ENCODE measurements at regions of chr10 and their contacts with region 1.

Region 1: GRCh38 chr10:6530211-6530840 is 49.8 kb downstream of the PRKCQ start:
- DNase-seq: peak; percentile 37 to 89 (median 85)
- ATAC-seq: peak; percentile 96
- H3K4me3 ChIP-seq: peak overlapping the region; percentile 34
- H3K4me3 Mint-ChIP-seq: peak overlapping the region; percentile 84 to 95 (median 88)
- H3K27ac ChIP-seq: peak overlapping the region; percentile 74
- H3K27ac Mint-ChIP-seq: peak overlapping the region; percentile 97 to 100 (median 99)
- H3K4me1 ChIP-seq: peaks cover 46 to 58% of the 10 kb centered on the region in 2 donors
- H3K4me1 Mint-ChIP-seq: peaks cover 67 to 99% (median 91%) of the 10 kb centered on the region in 7 donors
- H3K27me3 ChIP-seq: no peaks in the 10 kb centered on the region
- H3K27me3 Mint-ChIP-seq: no peaks in the 10 kb centered on the region

Region 2: GRCh38 chr10:6314620-6315205 is 215.6 kb before region 1 on chr10:
- CTCF ChIA-PET with region 1: no interaction called
- POLR2A ChIA-PET with region 1: no interaction called
- intact Hi-C with region 1: no loop called
- DNase-seq: no peak
- ATAC-seq: no peak
- H3K4me3 ChIP-seq: no peak overlapping the region
- H3K4me3 Mint-ChIP-seq: no peak overlapping the region
- H3K27ac ChIP-seq: no peak overlapping the region
- H3K27ac Mint-ChIP-seq: no peak overlapping the region
- H3K4me1 ChIP-seq: no peaks in the 10 kb centered on the region
- H3K4me1 Mint-ChIP-seq: peaks cover 0 to 19% (median 0%) of the 10 kb centered on the region in 7 donors
- H3K27me3 ChIP-seq: no peaks in the 10 kb centered on the region
- H3K27me3 Mint-ChIP-seq: no peaks in the 10 kb centered on the region

Region 3: DNA sequence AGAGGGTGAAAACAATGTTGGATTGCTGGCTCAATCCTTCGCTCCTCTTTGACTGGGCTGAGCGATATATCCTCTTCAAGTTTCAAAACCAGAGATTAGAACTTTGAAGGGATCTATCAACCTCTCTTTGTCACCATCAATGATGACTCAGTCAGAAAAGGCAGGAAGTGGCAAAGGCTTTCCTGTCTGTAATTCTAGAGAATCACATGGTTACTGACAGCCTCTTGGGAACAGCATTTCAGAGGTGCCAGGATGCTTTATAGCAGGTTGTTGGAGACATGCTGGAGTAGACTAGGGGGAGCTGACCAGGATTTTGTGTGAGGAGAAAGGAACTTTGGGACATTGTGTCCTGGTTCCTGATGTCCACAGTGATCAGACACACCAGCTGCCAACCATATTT is 31.6 kb before region 1 on chr10:
- CTCF ChIA-PET with region 1: no interaction called
- POLR2A ChIA-PET with region 1: interaction called, 5 read pairs
- intact Hi-C with region 1: loop called (anchors 1 kb)
- DNase-seq: peak in 8 of 9 donors; percentile 48 to 75 (median 67)
- ATAC-seq: peak; percentile 85
- H3K4me3 ChIP-seq: no peak overlapping the region
- H3K4me3 Mint-ChIP-seq: peak overlapping the region; percentile 13 to 86 (median 59)
- H3K27ac ChIP-seq: peak overlapping the region; percentile 36
- H3K27ac Mint-ChIP-seq: peak overlapping the region; percentile 81 to 94 (median 90)
- H3K4me1 ChIP-seq: peaks cover 33 to 49% of the 10 kb centered on the region in 2 donors
- H3K4me1 Mint-ChIP-seq: peaks cover 24 to 47% (median 43%) of the 10 kb centered on the region in 7 donors
- H3K27me3 ChIP-seq: no peaks in the 10 kb centered on the region
- H3K27me3 Mint-ChIP-seq: no peaks in the 10 kb centered on the region

Region 4: GRCh38 chr10:6563075-6563474 is 32.7 kb after region 1 on chr10:
- CTCF ChIA-PET with region 1: no interaction called
- POLR2A ChIA-PET with region 1: interaction called, 34 read pairs
- intact Hi-C with region 1: loop called (anchors 1 kb)
- DNase-seq: peak in 4 of 9 donors; percentile 33 to 60 (median 39)
- ATAC-seq: peak; percentile 56
- H3K4me3 ChIP-seq: peak overlapping the region; percentile 42
- H3K4me3 Mint-ChIP-seq: peak overlapping the region; percentile 69 to 89 (median 80)
- H3K27ac ChIP-seq: peak overlapping the region; percentile 46
- H3K27ac Mint-ChIP-seq: peak overlapping the region; percentile 47 to 94 (median 87)
- H3K4me1 ChIP-seq: peaks cover 69 to 73% of the 10 kb centered on the region in 2 donors
- H3K4me1 Mint-ChIP-seq: peaks cover 65 to 96% (median 91%) of the 10 kb centered on the region in 7 donors
- H3K27me3 ChIP-seq: no peaks in the 10 kb centered on the region
- H3K27me3 Mint-ChIP-seq: no peaks in the 10 kb centered on the region

Region 5: DNA sequence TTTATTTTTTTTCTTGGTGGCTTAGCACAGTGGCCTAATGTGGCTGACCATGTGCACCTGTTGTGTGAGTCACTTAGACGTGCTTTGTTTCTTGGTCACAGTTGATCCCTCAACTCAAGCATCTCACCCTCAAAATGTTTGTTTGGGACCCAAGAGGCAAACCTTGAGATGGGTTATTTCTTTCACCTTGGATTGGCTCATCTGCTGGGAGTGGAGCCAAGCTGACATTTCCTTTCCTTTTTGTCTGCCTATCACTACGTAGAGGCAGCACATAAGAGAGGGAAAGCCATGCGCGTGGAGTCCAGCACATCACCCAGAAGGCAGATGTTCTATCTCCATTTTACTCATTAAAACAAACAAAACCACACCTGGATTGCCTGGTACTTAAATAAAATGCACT is 56.2 kb after region 1 on chr10:
- CTCF ChIA-PET with region 1: interaction called, 3 read pairs
- POLR2A ChIA-PET with region 1: interaction called, 97 read pairs
- intact Hi-C with region 1: no loop called
- DNase-seq: peak in 2 of 9 donors; percentile 30 to 48
- ATAC-seq: peak; percentile 37
- H3K4me3 ChIP-seq: peak overlapping the region; percentile 61
- H3K4me3 Mint-ChIP-seq: peak overlapping the region; percentile 86 to 99 (median 93)
- H3K27ac ChIP-seq: peak overlapping the region; percentile 94
- H3K27ac Mint-ChIP-seq: peak overlapping the region; percentile 94 to 99 (median 97)
- H3K4me1 ChIP-seq: peaks cover 44 to 57% of the 10 kb centered on the region in 2 donors
- H3K4me1 Mint-ChIP-seq: peaks cover 38 to 100% (median 84%) of the 10 kb centered on the region in 7 donors
- H3K27me3 ChIP-seq: no peaks in the 10 kb centered on the region
- H3K27me3 Mint-ChIP-seq: no peaks in the 10 kb centered on the region